ENCODE measurements at regions of chr2 and their contacts with region 1.

Region 1: GRCh38 chr2:230762317-230762896 is 49.8 kb downstream of the CAB39 start:
- DNase-seq: peak; percentile 52
- H3K4me3 ChIP-seq: no peak overlapping the region
- H3K27ac ChIP-seq: no peak overlapping the region
- H3K4me1 ChIP-seq: peaks cover 26% of the 10 kb centered on the region
- H3K27me3 ChIP-seq: no peaks in the 10 kb centered on the region
- CTCF ChIP-seq: peak; percentile 40 to 66
- POLR2A ChIP-seq: no peak

Region 2: DNA sequence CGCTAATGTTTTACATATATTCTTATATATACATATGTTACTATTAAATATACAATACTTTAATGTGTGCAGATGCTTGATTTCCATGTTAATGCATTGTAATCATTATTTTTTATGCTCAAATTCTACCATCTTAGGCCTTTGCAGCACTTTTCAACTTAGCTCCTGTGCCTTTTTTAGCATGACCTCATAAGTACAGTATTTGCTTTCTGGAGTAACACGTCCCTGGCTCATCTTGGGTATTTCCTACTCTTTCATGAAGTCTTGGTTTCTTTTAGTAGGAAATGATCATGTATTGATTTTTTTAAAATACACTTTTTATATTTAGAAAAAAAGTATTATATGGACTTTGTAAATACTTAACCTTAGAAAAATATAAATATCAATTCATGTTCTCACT is 13.3 kb before region 1 on chr2:
- CTCF ChIA-PET with region 1: interaction called, 3 read pairs
- POLR2A ChIA-PET with region 1: no interaction called
- dilution Hi-C with region 1: no loop called
- intact Hi-C with region 1: loop called (anchors 1 kb)
- DNase-seq: no peak
- H3K4me3 ChIP-seq: no peak overlapping the region
- H3K27ac ChIP-seq: no peak overlapping the region
- H3K4me1 ChIP-seq: no peaks in the 10 kb centered on the region
- H3K27me3 ChIP-seq: no peaks in the 10 kb centered on the region
- CTCF ChIP-seq: no peak
- POLR2A ChIP-seq: no peak

Region 3: DNA sequence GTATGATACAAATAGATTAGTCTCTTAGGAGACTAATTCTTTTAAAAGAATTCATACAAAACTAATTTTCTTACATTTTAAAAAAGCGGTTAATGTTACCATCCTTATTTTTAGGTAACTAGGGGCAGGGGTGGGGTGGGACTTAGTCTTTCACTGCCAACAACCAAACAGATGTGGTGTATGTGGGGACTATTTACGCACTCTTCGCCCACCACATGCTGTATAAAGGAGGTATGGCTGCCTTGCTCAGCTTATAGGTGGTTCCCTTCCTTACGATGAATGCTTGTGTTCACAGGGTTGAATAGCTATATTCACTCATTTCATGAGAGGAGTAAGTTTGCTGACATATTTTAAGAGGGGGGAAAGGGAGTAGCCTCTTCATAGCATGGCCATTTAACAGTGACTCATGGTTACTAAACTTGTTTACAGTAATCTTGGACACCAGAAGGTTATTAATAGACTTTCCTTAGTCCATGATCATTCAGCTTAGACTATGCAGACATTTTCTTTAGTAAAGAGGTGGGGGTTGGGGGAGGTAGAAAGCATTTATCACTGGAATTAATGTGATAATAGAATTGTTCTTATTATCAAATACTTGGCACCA is 12.0 kb after region 1 on chr2:
- CTCF ChIA-PET with region 1: interaction called, 5 read pairs
- POLR2A ChIA-PET with region 1: no interaction called
- dilution Hi-C with region 1: no loop called
- intact Hi-C with region 1: loop called (anchors 1 kb)
- DNase-seq: peak; percentile 74
- H3K4me3 ChIP-seq: no peak overlapping the region
- H3K27ac ChIP-seq: peak overlapping the region; percentile 82
- H3K4me1 ChIP-seq: peaks cover 44% of the 10 kb centered on the region
- H3K27me3 ChIP-seq: no peaks in the 10 kb centered on the region
- CTCF ChIP-seq: no peak
- POLR2A ChIP-seq: no peak

Region 4: DNA sequence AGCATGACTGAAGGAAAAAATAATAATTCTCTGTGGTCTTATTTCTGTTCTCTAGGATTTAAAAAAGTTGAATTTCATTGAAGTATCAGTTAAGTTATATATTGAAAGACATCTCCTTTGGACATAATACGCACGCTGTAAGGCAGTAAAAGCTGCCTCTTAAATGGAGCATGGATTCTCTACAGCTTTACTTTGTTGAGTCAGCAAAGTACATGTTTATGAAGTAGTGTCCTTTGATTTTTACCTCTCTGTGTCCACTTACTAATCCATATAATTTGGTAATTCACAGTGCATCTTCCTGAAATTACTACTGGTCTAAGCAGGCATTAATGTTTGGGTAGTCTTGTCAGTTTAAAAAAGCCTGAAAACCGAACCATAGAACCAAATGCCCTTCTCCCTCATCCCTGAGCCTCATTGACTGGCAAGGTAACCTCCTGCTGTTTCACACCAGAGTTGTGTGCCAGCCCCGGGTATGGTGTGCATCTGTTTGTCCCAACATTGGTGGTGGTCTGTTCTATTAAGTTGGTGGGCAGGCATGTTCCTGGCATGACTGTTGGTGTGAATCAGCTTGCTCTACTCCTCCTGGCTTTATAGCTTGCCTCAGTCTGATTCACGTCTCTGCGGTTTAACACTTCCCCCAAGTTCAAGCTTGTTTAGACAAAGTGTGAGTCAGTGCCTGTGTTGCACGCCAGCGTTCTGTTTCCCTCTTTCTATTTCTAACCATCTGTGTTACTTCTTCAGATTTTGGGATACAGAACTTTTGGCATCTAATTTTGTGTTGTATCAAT is 31.4 kb after region 1 on chr2:
- CTCF ChIA-PET with region 1: interaction called, 14 read pairs
- POLR2A ChIA-PET with region 1: interaction called, 6 read pairs
- dilution Hi-C with region 1: no loop called
- intact Hi-C with region 1: loop called (anchors 1 kb)
- DNase-seq: peak; percentile 98
- H3K4me3 ChIP-seq: peak overlapping the region in 1 of 3 experiments; percentile 20
- H3K27ac ChIP-seq: peak overlapping the region; percentile 97
- H3K4me1 ChIP-seq: peaks cover 37% of the 10 kb centered on the region
- H3K27me3 ChIP-seq: no peaks in the 10 kb centered on the region
- CTCF ChIP-seq: no peak
- POLR2A ChIP-seq: peak; percentile 46

Region 5: GRCh38 chr2:231138699-231139098 is 376.3 kb after region 1 on chr2:
- CTCF ChIA-PET with region 1: no interaction called
- POLR2A ChIA-PET with region 1: no interaction called
- dilution Hi-C with region 1: no loop called
- intact Hi-C with region 1: no loop called
- DNase-seq: no peak
- H3K4me3 ChIP-seq: no peak overlapping the region
- H3K27ac ChIP-seq: no peak overlapping the region
- H3K4me1 ChIP-seq: peaks cover 10% of the 10 kb centered on the region
- H3K27me3 ChIP-seq: no peaks in the 10 kb centered on the region
- CTCF ChIP-seq: no peak
- POLR2A ChIP-seq: no peak